ENCODE measurements at regions of chr2 and their contacts with region 1.

Region 1: DNA sequence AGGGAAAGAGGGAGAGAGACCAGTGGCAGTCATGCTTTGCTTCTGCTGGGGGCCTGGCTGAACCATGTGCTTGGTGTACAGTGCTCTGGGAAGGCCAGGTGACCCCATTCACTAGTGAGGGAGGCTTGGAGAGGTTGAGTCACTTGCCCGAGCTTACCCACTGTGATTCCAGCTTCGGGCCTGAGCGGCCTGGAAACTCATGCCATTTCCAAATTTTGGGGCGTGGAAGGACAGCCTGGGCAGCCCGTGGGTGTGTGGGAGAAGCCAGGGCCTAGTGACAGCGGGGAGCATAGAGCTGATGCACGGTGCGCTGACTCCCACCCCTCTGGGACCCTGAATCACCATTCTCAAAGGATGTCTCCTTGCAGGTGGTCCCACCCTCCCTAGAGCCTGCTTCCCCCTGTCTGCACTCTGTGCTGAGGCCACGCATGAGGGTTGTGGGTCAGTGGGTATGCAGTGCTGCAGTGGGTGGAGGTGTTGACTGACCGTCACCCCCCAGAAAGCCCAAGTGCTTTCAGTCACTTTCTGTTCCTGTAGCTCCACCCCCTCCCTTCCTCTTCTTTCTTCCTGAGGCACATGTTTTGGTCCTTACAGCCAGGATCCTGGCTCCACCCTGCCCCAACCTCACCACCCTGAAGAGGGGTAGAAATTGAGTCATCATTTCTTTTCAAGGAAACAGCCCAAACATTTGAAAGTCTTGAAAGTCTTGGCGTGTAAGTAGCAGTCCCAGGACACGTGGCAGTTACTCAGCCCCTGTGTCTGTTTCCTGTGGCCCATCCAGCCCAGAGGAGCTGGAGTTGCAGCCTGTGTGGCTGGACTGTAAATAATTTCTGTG is 69.3 kb upstream of the MCFD2 start:
- DNase-seq: peak; percentile 89 to 90
- ATAC-seq: peak; percentile 74
- H3K4me3 ChIP-seq: no peak overlapping the region
- H3K27ac ChIP-seq: peak overlapping the region; percentile 8 to 65
- H3K4me1 ChIP-seq: peaks cover 0 to 4% of the 10 kb centered on the region in 2 donors
- H3K27me3 ChIP-seq: no peaks in the 10 kb centered on the region

Region 2: GRCh38 chr2:46915811-46916630 is 68.8 kb before region 1 on chr2:
- intact Hi-C with region 1: loop called in 1 of 2 experiments (anchors 2 kb)
- DNase-seq: peak; percentile 94 to 97
- ATAC-seq: peak; percentile 95
- H3K4me3 ChIP-seq: peak overlapping the region; percentile 71 to 78
- H3K27ac ChIP-seq: peak overlapping the region; percentile 7 to 84
- H3K4me1 ChIP-seq: peaks cover 0 to 8% of the 10 kb centered on the region in 2 donors
- H3K27me3 ChIP-seq: no peaks in the 10 kb centered on the region

Region 3: DNA sequence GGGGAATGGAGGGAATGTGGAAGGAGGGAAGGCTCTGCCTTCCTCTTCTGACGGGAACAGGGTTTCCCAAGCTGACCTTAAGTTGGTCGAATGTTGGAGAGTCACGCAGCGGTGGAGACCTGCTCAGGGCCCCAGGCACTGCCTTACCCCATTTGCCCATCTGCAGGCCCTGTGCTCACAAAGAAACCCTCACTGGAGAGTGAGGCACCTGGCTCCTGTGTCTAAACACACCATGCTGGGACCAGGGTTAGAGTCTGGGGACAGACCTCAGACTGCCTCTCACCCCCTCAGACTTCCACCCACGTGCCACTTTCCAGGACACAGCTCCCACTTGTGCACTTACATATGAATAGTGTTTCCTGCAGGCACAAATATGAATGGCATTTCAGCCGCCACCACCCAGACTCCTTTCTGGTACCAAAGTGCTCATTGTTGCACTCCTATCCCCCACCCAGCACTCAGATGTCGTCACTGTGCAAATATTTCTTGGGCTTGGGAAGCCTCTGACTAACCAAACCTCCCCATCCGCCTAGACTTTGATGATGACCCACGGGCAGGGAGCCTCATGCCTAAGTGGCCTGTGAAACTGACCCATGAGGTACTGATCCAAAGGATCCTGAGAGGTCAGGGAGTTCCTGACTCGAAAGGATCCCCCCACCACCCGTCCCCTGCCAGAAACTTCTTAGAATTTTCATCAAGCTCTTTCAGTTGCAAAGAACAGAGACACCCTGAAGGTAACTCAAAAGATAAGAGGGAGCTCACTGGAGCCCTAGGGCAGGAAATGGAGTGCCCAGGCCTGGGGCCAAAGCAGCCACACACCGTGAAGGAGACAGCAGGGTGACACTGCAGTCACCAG is 92.0 kb after region 1 on chr2:
- intact Hi-C with region 1: loop called in 1 of 2 experiments (anchors 1 kb)
- DNase-seq: peak; percentile 84 to 86
- ATAC-seq: peak; percentile 57
- H3K4me3 ChIP-seq: no peak overlapping the region
- H3K27ac ChIP-seq: peak overlapping the region; percentile 50 to 93
- H3K4me1 ChIP-seq: peaks cover 0 to 6% of the 10 kb centered on the region in 2 donors
- H3K27me3 ChIP-seq: no peaks in the 10 kb centered on the region

Region 4: DNA sequence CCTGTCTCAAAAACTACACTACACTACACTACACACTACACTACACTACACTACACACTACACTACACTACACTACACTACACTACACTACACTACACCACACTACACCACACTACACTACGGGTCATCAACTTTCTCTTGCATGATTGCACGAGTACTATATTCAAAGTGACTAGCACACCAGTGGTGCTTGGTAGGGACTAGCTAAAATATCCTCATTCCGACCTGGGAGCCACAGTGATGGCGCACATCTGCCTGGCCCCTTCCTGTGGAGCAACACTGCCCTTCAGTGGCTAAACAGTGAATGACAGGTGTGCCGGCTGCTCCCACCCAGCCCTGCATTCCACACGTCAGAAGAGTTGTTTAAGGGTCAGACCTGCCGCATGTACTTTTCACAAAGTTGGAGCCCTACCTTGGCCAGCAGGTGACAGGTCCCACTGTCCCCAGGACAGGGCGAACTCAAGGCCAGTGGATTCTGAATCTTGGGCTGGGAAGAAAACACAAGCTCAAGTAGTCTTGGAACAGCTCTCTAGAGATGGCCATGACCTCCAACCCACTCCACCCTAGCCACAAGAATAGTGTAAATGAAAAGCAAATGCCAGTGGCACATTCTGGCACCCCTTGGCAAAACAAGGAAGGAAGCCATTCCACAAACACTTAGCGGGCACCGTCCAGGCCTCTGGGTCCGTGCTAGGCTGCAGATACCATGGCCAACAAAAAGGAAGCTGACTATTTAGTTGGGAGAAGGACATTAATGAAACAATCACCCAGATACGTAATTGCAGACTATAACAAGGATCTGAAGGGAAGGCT is 338.4 kb after region 1 on chr2:
- intact Hi-C with region 1: no loop called
- DNase-seq: peak; percentile 81 to 91
- ATAC-seq: peak; percentile 93
- H3K4me3 ChIP-seq: no peak overlapping the region
- H3K27ac ChIP-seq: no peak overlapping the region
- H3K4me1 ChIP-seq: no peaks in the 10 kb centered on the region
- H3K27me3 ChIP-seq: no peaks in the 10 kb centered on the region

Measured in aorta (tissue), 5 donors.